ENCODE measurements at regions of chr3 and their contacts with region 1.

Region 1: GRCh38 chr3:132399054-132399929 is 18.0 kb upstream of the DNAJC13 start:
- DNase-seq: peak; percentile 76
- H3K4me3 ChIP-seq: peak overlapping the region in 1 of 2 experiments; percentile 14; a peak in 1 of 4 replicates
- H3K27ac ChIP-seq: no peak overlapping the region; a peak in 1 of 4 replicates
- H3K4me1 ChIP-seq: peaks cover 0 to 15% of the 10 kb centered on the region in 2 experiments; a peak in 2 of 4 replicates
- H3K27me3 ChIP-seq: no peaks in the 10 kb centered on the region
- CTCF ChIP-seq: peak; percentile 95
- EP300 ChIP-seq: no peak
- RAD21 ChIP-seq: peak; percentile 97

Region 2: GRCh38 chr3:132253262-132253878 is 145.9 kb before region 1 on chr3:
- CTCF ChIA-PET with region 1: interaction called, 80 read pairs
- POLR2A ChIA-PET with region 1: no interaction called
- DNase-seq: peak; percentile 45
- H3K4me3 ChIP-seq: peak overlapping the region in 1 of 2 experiments; percentile 10; a peak in 1 of 4 replicates
- H3K27ac ChIP-seq: no peak overlapping the region
- H3K4me1 ChIP-seq: no peaks in the 10 kb centered on the region; a peak in 1 of 4 replicates
- H3K27me3 ChIP-seq: no peaks in the 10 kb centered on the region
- CTCF ChIP-seq: peak; percentile 86
- EP300 ChIP-seq: no peak
- RAD21 ChIP-seq: peak; percentile 76

Region 3: GRCh38 chr3:132268956-132269355 is 130.3 kb before region 1 on chr3:
- CTCF ChIA-PET with region 1: interaction called, 12 read pairs
- POLR2A ChIA-PET with region 1: no interaction called
- DNase-seq: no peak
- H3K4me3 ChIP-seq: no peak overlapping the region
- H3K27ac ChIP-seq: no peak overlapping the region
- H3K4me1 ChIP-seq: no peaks in the 10 kb centered on the region
- H3K27me3 ChIP-seq: no peaks in the 10 kb centered on the region
- CTCF ChIP-seq: peak; percentile 51
- EP300 ChIP-seq: no peak
- RAD21 ChIP-seq: 0 out of 2 replicates have a peak, but pooled peaks have one; percentile 20

Region 4: DNA sequence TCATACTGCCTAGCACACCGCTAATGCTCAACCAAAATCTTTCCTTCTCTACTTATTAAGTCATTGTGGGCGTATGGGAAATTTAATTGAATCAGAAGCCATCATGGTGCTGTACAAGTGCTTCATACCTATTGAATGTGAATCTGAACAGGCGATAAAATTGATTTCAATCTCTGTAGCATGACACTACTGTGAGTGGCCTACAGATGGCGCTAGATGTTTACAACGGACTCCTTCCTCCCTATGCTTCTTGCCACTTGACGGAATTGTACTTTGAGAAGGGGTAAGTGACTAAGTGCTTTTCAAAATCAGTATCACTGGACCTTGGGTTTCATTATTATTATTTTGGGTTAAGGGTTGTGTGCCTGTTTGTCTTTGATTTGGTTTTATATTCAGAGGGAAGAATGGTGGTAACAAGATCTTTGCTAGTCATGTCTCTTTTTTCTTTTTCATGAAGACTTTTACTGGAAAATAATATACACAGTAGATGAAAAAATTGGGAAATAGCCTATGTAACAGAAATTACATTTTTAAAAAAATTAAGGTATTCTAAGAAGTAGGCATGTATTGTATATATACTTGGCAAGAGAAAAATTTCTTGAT is 46.6 kb before region 1 on chr3:
- CTCF ChIA-PET with region 1: interaction called, 383 read pairs
- POLR2A ChIA-PET with region 1: no interaction called
- DNase-seq: peak; percentile 62
- H3K4me3 ChIP-seq: no peak overlapping the region; a peak in 1 of 4 replicates
- H3K27ac ChIP-seq: no peak overlapping the region
- H3K4me1 ChIP-seq: no peaks in the 10 kb centered on the region
- H3K27me3 ChIP-seq: no peaks in the 10 kb centered on the region
- CTCF ChIP-seq: peak; percentile 93
- EP300 ChIP-seq: no peak
- RAD21 ChIP-seq: peak; percentile 94

Region 5: GRCh38 chr3:132368962-132369361 is 30.3 kb before region 1 on chr3:
- CTCF ChIA-PET with region 1: interaction called, 12 read pairs
- POLR2A ChIA-PET with region 1: no interaction called
- DNase-seq: no peak
- H3K4me3 ChIP-seq: no peak overlapping the region
- H3K27ac ChIP-seq: no peak overlapping the region
- H3K4me1 ChIP-seq: peaks cover 0 to 3% of the 10 kb centered on the region in 2 experiments; a peak in 1 of 4 replicates
- H3K27me3 ChIP-seq: no peaks in the 10 kb centered on the region
- CTCF ChIP-seq: no peak
- EP300 ChIP-seq: no peak
- RAD21 ChIP-seq: no peak

Region 6: GRCh38 chr3:132595014-132595413 is 195.7 kb after region 1 on chr3:
- CTCF ChIA-PET with region 1: no interaction called
- POLR2A ChIA-PET with region 1: no interaction called
- DNase-seq: no peak
- H3K4me3 ChIP-seq: no peak overlapping the region
- H3K27ac ChIP-seq: peak overlapping the region; percentile 76 to 92; a peak in 3 of 4 replicates
- H3K4me1 ChIP-seq: peaks cover 4 to 34% of the 10 kb centered on the region in 2 experiments; a peak in 3 of 4 replicates
- H3K27me3 ChIP-seq: no peaks in the 10 kb centered on the region
- CTCF ChIP-seq: no peak
- EP300 ChIP-seq: no peak
- RAD21 ChIP-seq: no peak